ENCODE measurements at regions of chr11 and their contacts with region 1.

Region 1: DNA sequence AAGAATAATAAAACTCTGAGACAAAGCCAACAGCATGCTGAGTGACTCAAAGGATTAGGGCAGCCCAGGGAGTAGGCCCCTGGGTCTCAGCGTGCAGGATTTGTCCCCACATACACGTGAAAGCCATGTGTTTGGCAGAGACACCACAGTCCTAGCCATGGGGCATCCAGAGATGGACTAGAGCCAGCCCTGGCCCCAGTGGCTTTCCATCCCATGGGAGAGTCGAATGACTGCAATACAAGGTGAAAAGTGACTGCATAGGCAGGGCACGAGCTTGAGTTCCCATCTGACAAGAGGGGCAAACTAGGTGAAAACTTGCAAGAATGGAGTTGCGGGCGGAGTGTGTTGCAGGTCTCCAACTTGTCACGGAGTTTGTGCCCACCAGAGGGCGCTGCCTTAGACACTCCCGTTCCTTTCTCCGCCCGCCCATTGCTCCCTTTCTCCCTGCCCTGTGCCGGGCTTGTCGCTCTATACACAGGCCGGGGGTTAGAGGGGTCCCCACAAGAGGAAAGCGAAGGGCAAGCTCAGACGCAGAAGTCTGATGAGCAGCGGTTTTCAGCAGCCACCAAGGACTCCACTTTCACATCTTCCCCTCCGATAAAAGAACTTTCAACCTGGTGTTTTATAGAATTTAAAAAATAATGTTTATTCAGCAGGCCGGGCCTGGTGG is 24.2 kb downstream of the TSKU start:
- DNase-seq: peak; percentile 57
- H3K4me3 Mint-ChIP-seq: no peak overlapping the region
- H3K27ac Mint-ChIP-seq: no peak overlapping the region
- H3K4me1 Mint-ChIP-seq: peaks cover 36% of the 10 kb centered on the region
- H3K27me3 Mint-ChIP-seq: peaks cover 2% of the 10 kb centered on the region

Region 2: DNA sequence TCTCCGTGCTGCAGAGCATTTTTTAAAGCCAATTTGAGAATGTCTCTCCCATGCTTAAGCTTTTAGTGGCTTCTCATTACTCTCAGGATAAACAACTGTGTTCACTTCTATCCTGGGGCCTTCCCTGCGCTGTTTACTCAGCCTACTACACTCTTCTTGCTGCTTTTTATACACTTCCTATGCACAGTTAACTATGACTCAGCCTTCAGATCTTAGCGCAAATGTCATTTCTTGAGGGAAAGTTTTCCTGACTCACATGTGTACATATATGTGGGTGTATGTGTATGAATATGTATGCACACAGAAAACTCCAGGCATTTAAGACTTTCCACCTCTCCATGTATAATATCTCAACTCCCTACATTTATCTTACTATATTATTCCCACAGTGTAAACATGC is 436.2 kb before region 1 on chr11:
- intact Hi-C with region 1: loop called (anchors 10 kb)
- DNase-seq: no peak
- H3K4me3 Mint-ChIP-seq: peak overlapping the region; percentile 10
- H3K27ac Mint-ChIP-seq: peak overlapping the region; percentile 76
- H3K4me1 Mint-ChIP-seq: peaks cover 41% of the 10 kb centered on the region
- H3K27me3 Mint-ChIP-seq: no peaks in the 10 kb centered on the region

Region 3: DNA sequence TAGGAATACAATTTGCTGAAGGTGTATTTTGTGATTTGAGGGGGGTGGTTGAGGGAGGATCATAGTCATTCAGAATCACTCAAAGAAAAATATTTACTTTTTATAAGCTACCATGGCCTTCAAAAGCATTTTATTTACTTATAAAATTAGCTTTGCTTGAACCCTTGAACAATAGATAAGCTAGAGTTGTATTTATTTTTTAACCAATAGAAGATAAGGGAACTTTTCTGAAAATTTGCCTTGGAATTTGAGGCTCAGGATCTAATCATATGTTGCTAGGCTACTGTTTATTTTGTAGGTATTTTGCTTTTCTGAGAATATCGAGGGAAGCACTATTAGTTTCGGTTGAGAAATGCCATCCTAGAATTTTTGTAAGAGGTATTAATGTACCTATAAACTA is 280.5 kb before region 1 on chr11:
- intact Hi-C with region 1: no loop called
- DNase-seq: no peak
- H3K4me3 Mint-ChIP-seq: no peak overlapping the region
- H3K27ac Mint-ChIP-seq: no peak overlapping the region
- H3K4me1 Mint-ChIP-seq: peaks cover 9% of the 10 kb centered on the region
- H3K27me3 Mint-ChIP-seq: no peaks in the 10 kb centered on the region

Region 4: DNA sequence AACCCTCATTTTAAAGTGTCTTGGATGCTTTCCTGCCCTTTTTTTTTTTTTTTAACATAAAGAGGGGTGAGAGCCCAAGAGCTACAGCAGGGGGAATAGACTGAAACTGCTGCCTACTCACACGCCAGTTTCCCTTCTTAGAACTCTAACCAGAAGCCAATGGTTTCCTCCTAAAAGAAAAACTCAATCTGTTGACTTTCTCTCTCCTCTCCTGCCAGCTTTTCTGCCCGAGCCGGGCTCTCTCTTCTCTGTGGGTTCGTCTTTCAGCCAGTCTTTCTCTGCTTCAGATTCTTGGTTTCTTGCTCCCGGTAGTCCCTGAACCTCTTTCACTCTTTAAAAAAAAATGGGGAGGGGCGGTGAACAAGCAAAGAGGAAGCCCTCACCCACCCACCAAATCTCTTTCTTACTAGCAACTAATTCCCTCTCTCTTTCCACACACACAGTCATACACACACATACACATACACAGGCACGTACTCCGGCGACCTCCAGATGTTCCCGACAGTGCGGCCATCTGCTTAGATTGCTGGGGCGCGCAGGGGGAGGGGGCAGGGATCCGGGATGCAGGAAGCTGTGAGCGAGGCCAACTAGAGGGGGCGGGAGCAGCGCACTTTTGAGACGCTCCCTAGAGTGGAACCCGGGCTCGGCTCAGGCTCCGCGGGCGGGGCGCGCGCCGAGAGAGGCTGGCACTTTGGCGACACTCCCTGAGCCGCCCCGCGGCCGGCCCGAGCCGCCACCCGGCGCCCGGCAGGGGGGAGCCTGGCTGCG is 24.6 kb before region 1 on chr11:
- intact Hi-C with region 1: loop called (anchors 1 kb)
- DNase-seq: peak; percentile 60
- H3K4me3 Mint-ChIP-seq: peak overlapping the region; percentile 80
- H3K27ac Mint-ChIP-seq: peak overlapping the region; percentile 76
- H3K4me1 Mint-ChIP-seq: peaks cover 22% of the 10 kb centered on the region
- H3K27me3 Mint-ChIP-seq: peaks cover 20% of the 10 kb centered on the region

Region 5: DNA sequence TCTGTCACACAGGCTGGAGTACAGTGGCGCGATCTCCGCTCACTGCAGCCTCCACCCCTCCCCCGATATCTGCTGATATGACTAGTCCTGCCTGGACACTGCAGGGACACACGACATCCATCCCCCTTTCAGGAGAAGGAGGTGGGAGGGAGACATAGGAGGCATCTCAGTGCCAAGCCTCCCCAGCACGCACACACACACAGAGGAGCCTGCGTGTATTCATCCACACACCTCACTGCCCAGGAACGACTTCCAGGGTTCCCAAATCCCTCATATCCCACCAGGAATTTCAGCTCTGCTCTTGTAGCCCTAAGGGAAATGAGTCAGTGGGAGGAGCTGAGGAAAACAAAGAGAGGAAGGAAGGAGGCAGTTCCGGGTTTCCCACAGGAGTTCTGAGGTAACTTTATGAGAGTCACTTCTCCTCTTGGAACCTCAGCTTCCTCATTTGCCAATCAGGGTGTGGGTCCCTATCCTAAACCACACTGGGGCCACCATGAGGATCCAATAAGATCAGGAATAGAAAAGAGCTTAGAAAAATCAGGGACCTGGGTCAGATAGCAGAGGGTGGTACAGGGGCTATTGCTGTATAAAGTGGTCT is 16.2 kb after region 1 on chr11:
- intact Hi-C with region 1: no loop called
- DNase-seq: no peak
- H3K4me3 Mint-ChIP-seq: no peak overlapping the region
- H3K27ac Mint-ChIP-seq: no peak overlapping the region
- H3K4me1 Mint-ChIP-seq: peaks cover 21% of the 10 kb centered on the region
- H3K27me3 Mint-ChIP-seq: no peaks in the 10 kb centered on the region

Region 6: DNA sequence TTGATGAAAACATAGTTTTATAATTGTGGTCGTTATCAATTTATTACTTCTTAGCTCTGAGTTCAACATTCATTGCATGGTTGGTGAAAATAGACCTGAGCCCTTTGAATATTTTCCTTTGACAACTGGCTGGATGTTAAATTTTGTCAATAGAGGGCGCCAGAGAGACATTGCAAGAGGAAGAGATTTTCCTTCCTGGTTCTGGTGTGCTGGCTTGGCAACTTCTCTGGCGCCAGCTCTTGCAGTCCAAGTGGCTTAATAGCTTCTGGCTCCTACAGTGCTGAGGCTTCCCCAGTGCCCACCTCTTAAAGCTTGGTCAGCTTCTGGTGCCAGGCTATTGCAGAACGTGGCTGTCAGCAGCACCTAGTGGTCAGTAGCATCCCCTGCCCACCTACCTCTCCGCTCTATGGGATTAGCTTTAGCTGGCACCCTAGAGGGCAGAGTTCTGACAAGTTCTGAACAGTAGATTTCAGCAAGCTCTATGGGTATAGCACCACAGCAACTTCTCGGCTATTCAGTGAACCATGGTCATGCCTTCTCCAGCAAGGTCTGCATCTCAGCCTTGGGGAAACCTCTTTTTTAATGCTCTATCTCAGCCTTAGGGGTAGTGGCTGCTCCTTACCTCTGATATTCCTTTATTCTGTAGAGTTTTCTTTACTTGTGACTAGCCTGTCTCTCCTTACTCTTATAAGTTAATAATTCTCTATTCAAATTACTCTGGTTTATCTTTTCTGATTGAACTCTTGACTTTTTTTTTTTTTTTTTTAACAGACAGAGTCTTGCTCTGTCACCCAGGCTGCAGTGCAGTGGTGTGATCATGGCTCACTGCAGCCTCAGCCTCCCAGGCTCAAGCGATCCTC is 112.8 kb after region 1 on chr11:
- intact Hi-C with region 1: loop called (anchors 1 kb)
- DNase-seq: peak; percentile 49
- H3K4me3 Mint-ChIP-seq: no peak overlapping the region
- H3K27ac Mint-ChIP-seq: no peak overlapping the region
- H3K4me1 Mint-ChIP-seq: peaks cover 14% of the 10 kb centered on the region
- H3K27me3 Mint-ChIP-seq: peaks cover 3% of the 10 kb centered on the region

Region 7: GRCh38 chr11:77091146-77091940 is 284.0 kb after region 1 on chr11:
- intact Hi-C with region 1: loop called (anchors 2 kb)
- DNase-seq: peak; percentile 70
- H3K4me3 Mint-ChIP-seq: no peak overlapping the region
- H3K27ac Mint-ChIP-seq: no peak overlapping the region
- H3K4me1 Mint-ChIP-seq: peaks cover 6% of the 10 kb centered on the region
- H3K27me3 Mint-ChIP-seq: no peaks in the 10 kb centered on the region

Region 8: DNA sequence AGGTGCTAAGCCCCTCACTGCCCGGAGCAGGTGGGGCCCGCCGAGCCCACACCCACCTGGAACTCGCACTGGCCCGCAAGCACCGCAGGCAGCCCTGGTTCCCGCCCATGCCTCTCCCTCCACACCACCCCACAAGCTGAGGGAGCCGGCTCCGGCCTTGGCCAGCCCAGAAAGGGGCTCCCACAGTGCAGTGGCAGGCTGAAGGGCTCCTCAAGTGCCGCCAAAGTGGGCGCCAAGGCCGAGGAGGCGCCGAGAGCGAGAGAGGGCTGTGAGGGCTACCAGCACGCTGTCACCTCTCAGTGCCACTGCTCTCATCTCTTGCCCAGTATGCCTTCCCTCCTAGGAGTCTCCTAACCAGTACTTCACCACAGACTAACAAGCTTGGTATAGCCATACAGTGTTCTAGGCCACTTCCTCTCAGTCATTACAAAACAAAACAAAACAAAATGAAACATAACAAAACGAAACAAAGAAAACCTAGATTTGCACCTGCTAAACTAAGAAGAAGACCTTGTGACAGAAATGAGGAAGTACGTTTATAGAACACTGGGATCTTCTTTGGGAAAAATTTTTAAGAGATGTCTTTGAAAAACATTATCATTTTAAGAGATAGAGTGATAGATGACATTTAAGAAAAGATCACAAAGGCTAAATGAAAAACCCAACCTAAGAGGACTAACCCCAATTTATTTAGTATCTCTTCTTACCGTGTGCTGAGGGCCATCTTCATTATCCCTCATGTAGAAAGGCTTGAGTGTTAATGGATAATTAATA is 1658.0 kb after region 1 on chr11:
- intact Hi-C with region 1: no loop called
- DNase-seq: peak; percentile 63
- H3K4me3 Mint-ChIP-seq: peak overlapping the region; percentile 52
- H3K27ac Mint-ChIP-seq: peak overlapping the region; percentile 70
- H3K4me1 Mint-ChIP-seq: peaks cover 41% of the 10 kb centered on the region
- H3K27me3 Mint-ChIP-seq: no peaks in the 10 kb centered on the region

Measured in activated T-helper 2 cell treated with anti-CD3 and anti-CD28 coated beads, Interferon-gamma antibody, Interleukin-2, Interleukin-4, amounts not matched to agents 10 μg/mL and 5 μg/mL and 100 μg/mL, durations not matched to agents 14 hours and 24 hours and 36 hours (primary cell).